BJ (cell line): ENCODE measurements at regions of chr2 and their contacts with region 1.

Region 1: DNA sequence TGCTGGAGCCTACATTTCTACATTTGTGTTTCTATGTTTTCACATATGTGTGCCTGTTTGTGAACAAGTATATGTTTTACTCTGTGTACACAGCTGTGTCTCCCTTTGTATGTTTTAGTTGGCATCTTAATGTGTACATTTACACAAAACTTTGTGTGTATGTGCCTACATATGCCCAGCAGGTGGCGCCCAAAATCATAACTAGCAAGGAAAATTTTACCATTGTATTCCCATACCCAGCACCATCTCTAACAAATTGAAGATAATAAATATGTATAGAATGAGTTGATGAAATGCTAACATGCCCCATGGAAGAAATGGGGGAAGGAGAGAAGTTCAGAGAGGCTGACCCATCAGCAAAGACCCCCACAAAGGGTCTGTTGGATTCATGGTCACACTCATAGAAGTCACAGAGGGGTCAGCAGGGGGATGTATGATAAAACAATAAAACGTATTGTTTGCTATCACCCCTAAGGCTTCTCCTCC is 48.1 kb downstream of the PKDCC start:
- DNase-seq: no peak
- H3K4me3 ChIP-seq: no peak overlapping the region
- H3K27me3 ChIP-seq: peaks cover 1% of the 10 kb centered on the region; the same call in 1 of the 2 replicates
- CTCF ChIP-seq: peak; percentile 68

Region 2: GRCh38 chr2:41853427-41854216 is 242.3 kb before region 1 on chr2:
- CTCF ChIA-PET with region 1: interaction called, 318 read pairs
- POLR2A ChIA-PET with region 1: no interaction called
- DNase-seq: no peak
- H3K4me3 ChIP-seq: no peak overlapping the region
- H3K27me3 ChIP-seq: peaks cover 2% of the 10 kb centered on the region
- CTCF ChIP-seq: peak; percentile 74

Region 3: DNA sequence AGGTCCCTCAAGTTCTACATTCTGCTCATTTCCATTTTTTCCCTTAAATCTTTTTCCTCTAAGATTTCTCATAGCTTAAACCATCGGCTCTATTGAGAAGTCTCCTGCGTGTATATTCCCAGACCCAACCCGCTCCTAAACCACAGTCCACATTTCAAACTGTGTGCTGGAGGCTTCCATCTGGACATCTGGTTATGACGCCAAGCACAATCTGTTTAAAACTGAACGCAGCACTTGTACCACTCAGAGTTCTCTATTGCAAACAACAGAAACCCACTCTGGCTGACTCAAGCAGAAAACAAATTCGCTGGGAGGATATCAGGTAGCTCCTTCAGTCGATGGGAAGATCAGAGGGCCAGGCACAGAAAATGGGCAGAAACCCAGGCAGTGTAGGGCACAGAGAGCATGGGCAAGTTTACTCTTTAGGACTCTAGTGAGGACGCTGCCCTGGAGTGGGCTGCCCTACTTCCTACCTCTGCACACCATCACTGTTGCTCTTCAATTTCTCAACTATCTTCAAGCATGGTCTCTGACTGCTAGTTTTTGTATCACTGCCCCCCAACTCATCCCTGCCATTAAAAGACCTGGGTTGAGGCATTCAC is 67.6 kb after region 1 on chr2:
- CTCF ChIA-PET with region 1: no interaction called
- POLR2A ChIA-PET with region 1: no interaction called
- DNase-seq: no peak
- H3K4me3 ChIP-seq: no peak overlapping the region
- H3K27me3 ChIP-seq: no peaks in the 10 kb centered on the region
- CTCF ChIP-seq: no peak

Region 4: GRCh38 chr2:42328148-42328833 is 232.3 kb after region 1 on chr2:
- CTCF ChIA-PET with region 1: interaction called, 103 read pairs
- POLR2A ChIA-PET with region 1: no interaction called
- DNase-seq: no peak
- H3K4me3 ChIP-seq: no peak overlapping the region
- H3K27me3 ChIP-seq: no peaks in the 10 kb centered on the region
- CTCF ChIP-seq: peak; percentile 50

Region 5: DNA sequence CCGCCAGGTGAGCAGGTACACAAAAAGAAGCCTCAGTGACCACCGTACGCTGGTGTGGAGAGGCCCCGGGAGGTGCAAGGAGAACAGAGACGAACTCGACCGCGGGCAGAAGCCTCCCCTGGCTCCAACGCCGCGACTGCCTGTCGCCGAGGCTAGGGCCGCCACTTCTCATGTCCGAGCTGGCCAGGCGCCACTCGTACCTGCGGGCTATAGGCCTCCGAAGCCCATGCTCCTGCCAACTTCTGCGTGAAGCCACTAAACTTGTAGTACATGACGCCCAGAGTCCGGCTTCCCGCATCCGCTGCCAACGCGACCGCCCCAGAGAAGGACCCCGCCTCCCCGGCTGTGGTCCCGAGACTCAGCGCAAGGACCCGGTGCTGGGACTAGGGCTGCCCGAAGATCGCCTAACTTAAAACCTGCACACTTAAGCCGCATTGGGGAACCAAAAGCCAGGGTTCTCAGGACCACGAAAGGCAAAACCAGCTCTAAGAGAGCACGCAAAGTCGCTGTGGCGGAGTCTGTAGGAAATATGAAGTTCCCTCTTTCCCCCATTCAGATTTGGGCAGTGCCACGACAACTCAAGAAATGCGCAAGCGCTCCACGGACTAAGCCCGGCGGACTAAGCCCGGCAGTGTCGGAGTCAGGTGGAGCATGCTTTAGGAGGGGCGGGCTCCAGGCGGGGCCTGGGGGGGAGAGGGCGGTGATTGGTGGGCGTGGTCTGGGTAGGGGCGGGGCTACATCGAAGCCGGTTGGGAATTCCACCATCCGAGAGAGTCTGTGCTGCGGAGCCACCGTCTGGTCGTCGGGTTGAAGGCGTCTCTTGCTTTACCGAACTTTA is 265.1 kb after region 1 on chr2 and contains the start of gene COX7A2L:
- CTCF ChIA-PET with region 1: interaction called, 12 read pairs
- POLR2A ChIA-PET with region 1: no interaction called
- DNase-seq: peak; percentile 78
- H3K4me3 ChIP-seq: peak within 1 kb of the TSS; percentile 96
- H3K27me3 ChIP-seq: no peaks in the 10 kb centered on the region
- CTCF ChIP-seq: peak; percentile 45
- polyA plus RNA-seq, gene COX7A2L: 153 and 200 TPM in 2 replicates